Vagina (tissue), 2 donors: ENCODE measurements at regions of chr14 and their contacts with region 1.

Region 1: GRCh38 chr14:105248368-105248756 is at the start of gene BTBD6:
- DNase-seq: no peak
- H3K4me3 ChIP-seq: peak within 1 kb of the TSS; percentile 53 to 74
- H3K27ac ChIP-seq: peak within 1 kb of the TSS; percentile 86
- H3K4me1 ChIP-seq: peaks cover 25% of the 10 kb centered on the region
- H3K27me3 ChIP-seq: no peaks in the 10 kb centered on the region
- CTCF ChIP-seq: no peak
- POLR2A ChIP-seq: no peak
- total RNA-seq, gene BTBD6: 45.9 TPM

Region 2: DNA sequence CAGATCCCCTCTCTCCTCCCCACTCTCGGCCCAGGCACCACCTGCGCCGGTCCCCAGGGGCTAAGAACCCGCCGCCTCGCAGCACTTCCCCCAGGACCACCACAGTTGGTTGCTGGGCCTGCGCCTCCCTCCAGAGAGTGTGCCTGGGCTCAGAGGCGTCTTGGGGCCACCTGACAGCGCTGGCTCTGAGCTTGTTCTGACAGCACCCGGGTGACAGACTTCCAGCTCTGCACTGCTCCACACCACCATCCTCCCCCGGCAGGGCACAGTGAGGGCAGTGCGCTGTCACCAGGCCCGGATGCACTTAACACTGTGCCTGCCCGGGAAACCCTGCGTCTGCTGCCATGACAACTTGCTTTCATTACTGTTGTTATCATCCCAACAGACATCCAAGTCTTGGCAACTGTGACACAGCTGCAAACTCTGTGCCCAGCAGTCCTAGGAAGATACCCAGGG is 45.8 kb after region 1 on chr14:
- intact Hi-C with region 1: loop called (anchors 10 kb)
- DNase-seq: no peak
- H3K4me3 ChIP-seq: no peak overlapping the region
- H3K27ac ChIP-seq: no peak overlapping the region
- H3K4me1 ChIP-seq: peaks cover 48% of the 10 kb centered on the region
- H3K27me3 ChIP-seq: no peaks in the 10 kb centered on the region
- CTCF ChIP-seq: no peak
- POLR2A ChIP-seq: no peak